Activated CD4-positive, alpha-beta T cell treated with anti-CD3 and anti-CD28 coated beads for 36 hours (primary cell): ENCODE measurements at regions of chr2 and their contacts with region 1.

Region 1: GRCh38 chr2:191555092-191555742 is 122.7 kb upstream of the NABP1 start:
- DNase-seq: peak; percentile 90
- ATAC-seq: peak; percentile 93
- H3K4me3 Mint-ChIP-seq: no peak overlapping the region
- H3K27ac Mint-ChIP-seq: no peak overlapping the region
- H3K4me1 Mint-ChIP-seq: peaks cover 2% of the 10 kb centered on the region
- H3K27me3 Mint-ChIP-seq: peaks cover 14% of the 10 kb centered on the region

Region 2: DNA sequence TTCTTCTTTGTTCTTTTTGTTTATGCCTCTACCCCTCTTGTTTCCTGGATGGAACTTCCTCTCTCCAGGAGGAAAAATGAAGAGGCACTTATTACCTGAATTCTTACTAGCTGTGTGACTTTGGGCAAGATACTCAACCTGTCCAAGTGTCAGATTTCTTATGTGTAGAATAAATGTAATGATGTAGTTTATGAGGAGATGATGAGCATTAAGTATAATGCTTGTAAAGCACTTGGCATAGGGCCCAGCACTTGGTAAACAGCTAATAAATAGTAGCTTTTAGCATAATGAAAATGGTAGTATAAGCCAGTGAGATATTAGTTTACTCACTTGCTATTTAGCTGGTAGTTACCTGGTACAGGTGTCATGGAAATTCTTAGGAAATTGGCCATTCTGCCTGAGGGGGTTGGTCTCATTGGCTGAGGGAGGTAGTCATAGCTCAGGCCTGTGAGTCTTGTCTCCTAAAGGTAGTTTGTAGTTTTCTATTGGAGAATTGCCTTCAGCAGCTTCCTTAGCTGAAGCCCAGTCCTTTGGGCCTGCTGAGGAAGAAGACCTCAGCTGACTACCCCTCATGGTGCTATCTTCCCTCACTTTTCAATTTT is 10.7 kb before region 1 on chr2:
- CTCF ChIA-PET with region 1: interaction called, 31 read pairs
- POLR2A ChIA-PET with region 1: no interaction called
- intact Hi-C with region 1: no loop called
- DNase-seq: no peak
- ATAC-seq: no peak
- H3K4me3 Mint-ChIP-seq: no peak overlapping the region
- H3K27ac Mint-ChIP-seq: no peak overlapping the region
- H3K4me1 Mint-ChIP-seq: no peaks in the 10 kb centered on the region
- H3K27me3 Mint-ChIP-seq: no peaks in the 10 kb centered on the region

Region 3: GRCh38 chr2:191691016-191691735 is 136.0 kb after region 1 on chr2:
- CTCF ChIA-PET with region 1: interaction called, 23 read pairs
- POLR2A ChIA-PET with region 1: no interaction called
- intact Hi-C with region 1: loop called in 1 of 2 experiments (anchors 1 kb)
- DNase-seq: peak; percentile 58
- ATAC-seq: peak; percentile 43
- H3K4me3 Mint-ChIP-seq: peak overlapping the region; percentile 25
- H3K27ac Mint-ChIP-seq: peak overlapping the region; percentile 77
- H3K4me1 Mint-ChIP-seq: peaks cover 56% of the 10 kb centered on the region
- H3K27me3 Mint-ChIP-seq: no peaks in the 10 kb centered on the region

Region 4: GRCh38 chr2:191811807-191812602 is 256.8 kb after region 1 on chr2:
- CTCF ChIA-PET with region 1: interaction called, 11 read pairs
- POLR2A ChIA-PET with region 1: interaction called, 3 read pairs
- intact Hi-C with region 1: loop called in 1 of 2 experiments (anchors 5 kb)
- DNase-seq: peak; percentile 65
- ATAC-seq: no peak
- H3K4me3 Mint-ChIP-seq: no peak overlapping the region
- H3K27ac Mint-ChIP-seq: no peak overlapping the region
- H3K4me1 Mint-ChIP-seq: no peaks in the 10 kb centered on the region
- H3K27me3 Mint-ChIP-seq: peaks cover 5% of the 10 kb centered on the region